ENCODE measurements at regions of chr5 and their contacts with region 1.

Region 1: DNA sequence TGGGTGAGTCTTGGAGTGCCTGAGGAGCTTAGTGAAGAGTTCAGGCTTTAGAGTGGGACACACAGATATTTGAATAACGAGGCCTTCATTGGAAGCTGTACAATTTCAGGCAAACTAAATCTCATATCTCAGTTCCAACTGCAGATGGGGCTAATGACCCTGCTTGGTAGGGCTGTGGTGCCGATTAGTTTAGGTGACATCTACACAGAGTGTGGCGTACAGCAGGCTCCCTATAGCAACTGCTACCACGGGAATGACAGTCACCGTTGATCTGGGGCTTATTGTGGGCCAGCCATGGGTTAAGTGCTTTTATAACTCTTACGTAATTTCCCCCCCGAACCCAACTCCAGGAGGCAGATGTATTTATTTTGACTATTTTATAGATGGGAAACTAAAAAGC is 70.8 kb downstream of the FAT2 start:
- DNase-seq: no peak
- ATAC-seq: peak; percentile 90

Region 2: DNA sequence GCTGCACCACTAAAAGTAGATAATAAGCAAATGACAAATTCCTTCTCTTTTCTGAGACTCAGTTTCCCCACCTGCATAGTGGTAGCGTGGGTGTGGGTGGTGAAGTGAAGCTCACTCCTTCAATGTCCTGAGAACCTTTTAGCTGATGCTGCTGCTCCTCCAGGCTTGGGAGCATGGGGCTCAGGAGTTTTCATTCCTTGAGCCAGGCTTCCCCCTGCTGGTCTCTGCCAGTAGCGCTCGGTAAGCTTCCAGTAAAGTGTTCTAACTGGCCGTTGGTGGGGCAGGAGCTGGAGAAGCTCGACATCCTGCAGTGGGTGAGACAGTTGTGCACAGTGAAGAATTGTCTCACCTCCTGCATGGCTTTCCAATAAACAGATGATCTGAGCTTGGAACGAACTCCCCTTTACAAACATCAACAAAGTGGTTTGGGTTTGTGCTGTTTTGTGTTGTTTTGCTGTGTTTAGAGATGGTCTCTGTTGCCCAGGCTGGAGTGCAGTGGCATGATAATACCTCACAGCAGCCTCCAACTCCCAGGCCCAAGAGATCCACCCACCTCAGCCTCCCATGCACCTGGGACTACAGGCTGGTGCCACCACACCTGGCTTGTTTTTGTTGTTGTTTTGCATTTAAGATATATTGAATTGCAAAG is 131.8 kb after region 1 on chr5:
- intact Hi-C with region 1: loop called (anchors 2 kb)
- DNase-seq: peak; percentile 86
- ATAC-seq: peak; percentile 97

Region 3: DNA sequence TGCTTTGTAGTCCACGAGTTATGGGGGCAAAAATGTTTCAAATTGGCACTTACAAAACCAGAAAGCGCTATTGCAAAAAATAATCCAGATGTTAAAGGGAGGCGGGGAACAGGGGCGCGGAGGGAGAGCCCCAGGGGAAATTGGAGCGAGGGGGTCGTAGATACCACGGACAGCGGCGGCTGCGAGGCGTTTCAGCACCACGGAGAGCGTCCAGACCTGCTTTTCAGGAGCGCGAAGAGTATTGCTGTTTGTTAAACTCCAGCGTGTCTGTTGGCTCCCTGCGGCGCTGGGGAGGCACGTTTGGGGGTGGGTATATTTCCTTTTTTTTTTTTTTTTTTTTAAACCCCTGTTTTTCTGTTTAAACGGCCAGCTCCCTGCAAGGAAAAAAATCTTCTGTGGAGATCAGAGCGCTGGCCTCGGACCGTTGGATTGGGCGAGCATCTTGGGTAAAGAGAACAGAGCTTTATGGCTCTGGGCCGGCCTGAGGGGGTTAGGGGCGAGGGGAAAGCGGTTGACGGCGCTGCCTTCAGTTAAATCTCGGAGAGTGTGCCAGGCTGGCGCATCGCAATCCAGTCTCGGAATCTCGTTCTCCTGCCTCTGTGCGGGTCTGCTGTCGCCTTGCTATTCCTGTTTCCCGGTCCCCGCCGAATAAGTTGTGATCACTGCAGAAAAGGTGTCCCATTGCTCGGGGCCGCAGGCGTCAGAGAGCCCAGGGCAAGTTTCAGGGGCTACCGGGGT is 404.4 kb after region 1 on chr5 and contains the start of gene GLRA1:
- intact Hi-C with region 1: no loop called
- DNase-seq: peak; percentile 67
- ATAC-seq: peak; percentile 60
- total RNA-seq, gene GLRA1: not detected

Measured in Right ventricle myocardium superior (tissue), 1 donor.